Caco-2 (cell line): ENCODE measurements at regions of chr17 and their contacts with region 1.

Region 1: GRCh38 chr17:61862975-61863800 is at the start of gene BRIP1:
- DNase-seq: peak; percentile 95 to 97
- H3K4me3 ChIP-seq: peak within 1 kb of the TSS; percentile 76
- H3K4me3 Mint-ChIP-seq: peak within 1 kb of the TSS; percentile 97
- H3K27ac Mint-ChIP-seq: peak within 1 kb of the TSS; percentile 97
- H3K4me1 ChIP-seq: peaks cover 20% of the 10 kb centered on the region
- H3K4me1 Mint-ChIP-seq: peaks cover 11% of the 10 kb centered on the region
- H3K27me3 ChIP-seq: no peaks in the 10 kb centered on the region
- H3K27me3 Mint-ChIP-seq: no peaks in the 10 kb centered on the region
- CTCF ChIP-seq: no peak
- total RNA-seq, gene BRIP1: 17.3 and 18.3 TPM in 2 replicates

Region 2: GRCh38 chr17:61842899-61843298 is 20.3 kb before region 1 on chr17:
- CTCF ChIA-PET with region 1: interaction called, 3 read pairs
- POLR2A ChIA-PET with region 1: interaction called, 12 read pairs
- intact Hi-C with region 1: no loop called
- DNase-seq: no peak
- H3K4me3 ChIP-seq: no peak overlapping the region
- H3K4me3 Mint-ChIP-seq: no peak overlapping the region
- H3K27ac Mint-ChIP-seq: no peak overlapping the region
- H3K4me1 ChIP-seq: no peaks in the 10 kb centered on the region
- H3K4me1 Mint-ChIP-seq: no peaks in the 10 kb centered on the region
- H3K27me3 ChIP-seq: no peaks in the 10 kb centered on the region
- H3K27me3 Mint-ChIP-seq: no peaks in the 10 kb centered on the region
- CTCF ChIP-seq: no peak

Region 3: DNA sequence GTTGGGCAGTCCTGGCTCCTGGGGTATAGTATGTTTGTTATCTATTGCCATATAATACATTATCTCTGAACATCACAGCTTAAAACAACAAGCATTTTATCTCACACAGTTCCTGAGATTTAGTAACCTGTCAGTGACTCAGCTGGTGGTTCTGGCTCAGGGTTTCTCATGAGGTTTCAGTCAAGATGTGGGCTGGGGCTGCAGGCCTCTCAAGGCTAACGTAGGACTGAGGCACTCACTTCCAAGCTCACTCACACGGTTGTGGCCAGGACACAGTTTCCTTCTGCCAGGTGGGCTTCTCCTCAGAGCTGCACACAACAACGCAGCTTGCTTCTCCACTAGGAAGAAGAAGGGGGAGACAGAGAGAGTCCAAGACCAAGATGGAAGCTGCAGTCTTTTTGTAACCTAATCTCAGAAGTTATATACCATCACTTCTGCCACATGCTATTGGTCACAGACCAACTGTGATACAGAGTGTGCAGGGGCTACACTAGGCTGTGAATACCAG is 212.2 kb after region 1 on chr17:
- CTCF ChIA-PET with region 1: no interaction called
- POLR2A ChIA-PET with region 1: no interaction called
- intact Hi-C with region 1: no loop called
- DNase-seq: no peak
- H3K4me3 ChIP-seq: no peak overlapping the region
- H3K4me3 Mint-ChIP-seq: no peak overlapping the region
- H3K27ac Mint-ChIP-seq: no peak overlapping the region
- H3K4me1 ChIP-seq: no peaks in the 10 kb centered on the region
- H3K4me1 Mint-ChIP-seq: no peaks in the 10 kb centered on the region
- H3K27me3 ChIP-seq: no peaks in the 10 kb centered on the region
- H3K27me3 Mint-ChIP-seq: no peaks in the 10 kb centered on the region
- CTCF ChIP-seq: no peak